ENCODE measurements at regions of chr5 and their contacts with region 1.

Region 1: GRCh38 chr5:53008751-53009150 is 19.6 kb downstream of the ITGA2 start:
- DNase-seq: peak; percentile 20
- H3K4me3 Mint-ChIP-seq: peak overlapping the region; percentile 41
- H3K27ac Mint-ChIP-seq: peak overlapping the region; percentile 87
- H3K4me1 Mint-ChIP-seq: peaks cover 75% of the 10 kb centered on the region
- H3K27me3 Mint-ChIP-seq: peaks cover 5% of the 10 kb centered on the region

Region 2: GRCh38 chr5:52771343-52772039 is 237.3 kb before region 1 on chr5:
- intact Hi-C with region 1: loop called (anchors 1 kb)
- DNase-seq: peak; percentile 37
- H3K4me3 Mint-ChIP-seq: peak overlapping the region; percentile 3
- H3K27ac Mint-ChIP-seq: peak overlapping the region; percentile 61
- H3K4me1 Mint-ChIP-seq: peaks cover 81% of the 10 kb centered on the region
- H3K27me3 Mint-ChIP-seq: peaks cover 5% of the 10 kb centered on the region

Region 3: GRCh38 chr5:52893105-52893504 is 115.6 kb before region 1 on chr5:
- intact Hi-C with region 1: no loop called
- DNase-seq: no peak
- H3K4me3 Mint-ChIP-seq: no peak overlapping the region
- H3K27ac Mint-ChIP-seq: no peak overlapping the region
- H3K4me1 Mint-ChIP-seq: no peaks in the 10 kb centered on the region
- H3K27me3 Mint-ChIP-seq: peaks cover 13% of the 10 kb centered on the region

Region 4: DNA sequence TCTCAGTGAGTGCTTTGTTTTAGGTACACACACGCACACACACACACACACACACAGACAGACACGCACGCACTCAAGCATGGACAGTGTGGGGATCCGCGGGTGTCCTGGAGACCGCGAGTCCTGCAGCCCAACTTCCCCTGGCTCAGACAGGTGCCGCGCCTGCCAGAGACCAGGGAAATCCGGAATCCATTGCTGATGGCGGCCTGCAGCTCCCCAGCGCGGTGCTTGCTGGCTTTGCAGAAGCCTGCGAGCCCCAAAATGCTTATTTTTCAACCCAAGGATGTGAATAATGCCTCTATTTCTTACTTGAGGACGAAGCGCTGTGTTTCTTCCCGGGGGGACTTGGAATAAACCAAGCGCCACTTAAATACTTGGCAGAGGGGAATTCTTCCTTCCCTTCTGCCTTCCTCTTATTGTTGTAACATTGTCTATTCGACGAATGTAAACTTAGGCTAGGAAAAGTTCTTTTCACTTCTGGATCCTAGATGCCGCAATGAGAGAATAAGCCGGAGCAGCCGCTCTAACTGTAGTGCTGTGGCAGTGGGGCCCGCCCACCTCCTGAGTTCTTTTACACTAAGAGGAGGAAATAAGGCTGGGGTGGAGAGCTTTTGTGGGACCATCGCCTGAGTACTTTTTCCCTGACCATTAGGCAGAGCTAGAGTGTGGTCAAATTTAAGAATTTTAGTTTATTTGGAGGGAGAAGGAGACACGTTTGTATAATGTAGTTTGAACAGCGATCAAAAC is 18.8 kb before region 1 on chr5:
- intact Hi-C with region 1: loop called (anchors 1 kb)
- DNase-seq: peak; percentile 21
- H3K4me3 Mint-ChIP-seq: peak overlapping the region; percentile 83
- H3K27ac Mint-ChIP-seq: peak overlapping the region; percentile 45
- H3K4me1 Mint-ChIP-seq: peaks cover 34% of the 10 kb centered on the region
- H3K27me3 Mint-ChIP-seq: peaks cover 2% of the 10 kb centered on the region

Region 5: GRCh38 chr5:53031695-53032096 is 22.9 kb after region 1 on chr5:
- intact Hi-C with region 1: loop called (anchors 1 kb)
- DNase-seq: peak; percentile 39
- H3K4me3 Mint-ChIP-seq: peak overlapping the region; percentile 57
- H3K27ac Mint-ChIP-seq: peak overlapping the region; percentile 87
- H3K4me1 Mint-ChIP-seq: peaks cover 57% of the 10 kb centered on the region
- H3K27me3 Mint-ChIP-seq: no peaks in the 10 kb centered on the region

Region 6: DNA sequence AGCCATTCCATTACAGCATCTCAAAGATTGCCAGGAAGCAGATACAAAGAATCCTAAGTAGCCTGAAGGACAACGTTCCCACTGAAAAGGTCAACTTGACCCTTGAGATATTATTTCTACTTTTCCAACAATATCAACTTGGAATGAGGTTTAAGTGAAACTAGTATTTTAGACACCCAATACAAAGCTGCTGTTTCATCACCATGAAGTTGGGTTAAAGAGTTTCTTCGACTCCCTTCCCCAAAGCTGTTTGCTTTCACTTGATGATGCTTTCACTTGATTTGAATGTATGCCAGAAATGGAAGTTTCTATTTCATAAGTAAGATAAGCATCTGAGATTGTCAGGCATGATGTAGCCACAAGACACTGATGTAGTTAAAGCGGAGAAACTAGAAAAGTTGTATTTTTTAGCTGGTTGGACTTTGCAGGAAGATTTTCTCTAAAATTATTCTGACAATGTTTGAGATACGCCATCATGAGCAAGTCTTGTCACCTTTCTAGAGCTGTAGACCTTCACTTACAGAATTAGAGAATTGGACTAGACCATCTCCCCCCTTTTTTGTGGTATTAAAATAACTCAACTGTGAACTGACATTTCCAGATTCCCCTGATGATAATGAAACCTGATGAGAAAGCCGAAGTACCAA is 80.7 kb after region 1 on chr5:
- intact Hi-C with region 1: loop called (anchors 1 kb)
- DNase-seq: no peak
- H3K4me3 Mint-ChIP-seq: peak overlapping the region; percentile 53
- H3K27ac Mint-ChIP-seq: peak overlapping the region; percentile 75
- H3K4me1 Mint-ChIP-seq: peaks cover 54% of the 10 kb centered on the region
- H3K27me3 Mint-ChIP-seq: peaks cover 6% of the 10 kb centered on the region